ENCODE measurements at regions of chr5 and their contacts with region 1.

Region 1: GRCh38 chr5:137660349-137660817 is 75.5 kb downstream of the KLHL3 start:
- DNase-seq: peak; percentile 63 to 70 (median 69)
- H3K4me3 ChIP-seq: no peak overlapping the region
- H3K4me3 Mint-ChIP-seq: peak overlapping the region in 1 of 8 donors; percentile 1
- H3K27ac ChIP-seq: no peak overlapping the region
- H3K27ac Mint-ChIP-seq: peak overlapping the region in 3 of 7 donors; percentile 3 to 40 (median 25)
- H3K4me1 ChIP-seq: peaks cover 4% of the 10 kb centered on the region
- H3K4me1 Mint-ChIP-seq: peaks cover 3 to 11% (median 9%) of the 10 kb centered on the region in 4 donors
- H3K27me3 ChIP-seq: no peaks in the 10 kb centered on the region
- H3K27me3 Mint-ChIP-seq: no peaks in the 10 kb centered on the region

Region 2: DNA sequence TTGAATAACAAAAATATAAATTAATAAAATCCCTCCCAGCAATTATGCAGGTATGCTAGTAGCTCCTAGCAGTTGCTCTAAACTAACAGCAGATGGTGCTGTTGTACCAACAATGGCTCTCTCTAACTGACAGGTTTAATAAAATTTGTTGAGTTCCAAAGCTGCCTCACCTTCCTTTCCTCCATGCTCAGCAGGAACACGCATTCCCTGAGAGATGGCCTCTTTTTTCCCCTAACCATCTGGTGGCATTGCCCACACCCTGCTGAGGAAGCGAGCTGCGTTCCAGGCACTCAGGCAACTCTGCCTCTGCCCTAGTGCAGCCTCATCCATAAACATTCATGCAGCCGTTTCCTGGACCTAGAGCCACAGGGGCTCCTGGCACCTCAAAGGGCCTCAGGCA is 30.7 kb before region 1 on chr5:
- CTCF ChIA-PET with region 1: interaction called, 41 read pairs
- POLR2A ChIA-PET with region 1: interaction called, 3 read pairs
- intact Hi-C with region 1: no loop called
- DNase-seq: peak in 4 of 5 donors; percentile 52 to 54 (median 54)
- H3K4me3 ChIP-seq: no peak overlapping the region
- H3K4me3 Mint-ChIP-seq: no peak overlapping the region
- H3K27ac ChIP-seq: no peak overlapping the region
- H3K27ac Mint-ChIP-seq: no peak overlapping the region
- H3K4me1 ChIP-seq: no peaks in the 10 kb centered on the region
- H3K4me1 Mint-ChIP-seq: no peaks in the 10 kb centered on the region
- H3K27me3 ChIP-seq: no peaks in the 10 kb centered on the region
- H3K27me3 Mint-ChIP-seq: no peaks in the 10 kb centered on the region

Region 3: DNA sequence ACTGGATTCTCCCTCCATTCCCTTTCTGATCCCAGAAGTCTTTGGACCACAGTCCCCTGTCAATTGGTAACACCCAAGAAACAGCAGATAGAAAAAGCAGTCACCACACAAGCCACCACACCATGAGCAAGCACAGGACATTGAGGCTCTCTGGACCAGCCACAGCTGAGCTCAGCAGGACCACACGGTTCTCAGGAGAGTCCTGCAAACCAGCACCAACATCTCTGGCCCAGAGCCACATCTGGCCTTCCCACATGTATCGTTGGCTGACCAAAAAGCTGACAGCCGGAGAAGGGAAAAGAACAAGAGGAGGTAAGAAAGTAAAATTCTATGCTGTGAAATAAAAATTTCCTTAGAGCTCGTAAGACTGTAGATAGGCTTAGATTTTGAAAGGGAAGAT is 18.8 kb after region 1 on chr5:
- CTCF ChIA-PET with region 1: interaction called, 15 read pairs
- POLR2A ChIA-PET with region 1: no interaction called
- intact Hi-C with region 1: no loop called
- DNase-seq: no peak
- H3K4me3 ChIP-seq: no peak overlapping the region
- H3K4me3 Mint-ChIP-seq: no peak overlapping the region
- H3K27ac ChIP-seq: no peak overlapping the region
- H3K27ac Mint-ChIP-seq: no peak overlapping the region
- H3K4me1 ChIP-seq: no peaks in the 10 kb centered on the region
- H3K4me1 Mint-ChIP-seq: peaks cover 0 to 6% (median under 1%) of the 10 kb centered on the region in 4 donors
- H3K27me3 ChIP-seq: no peaks in the 10 kb centered on the region
- H3K27me3 Mint-ChIP-seq: no peaks in the 10 kb centered on the region

Region 4: DNA sequence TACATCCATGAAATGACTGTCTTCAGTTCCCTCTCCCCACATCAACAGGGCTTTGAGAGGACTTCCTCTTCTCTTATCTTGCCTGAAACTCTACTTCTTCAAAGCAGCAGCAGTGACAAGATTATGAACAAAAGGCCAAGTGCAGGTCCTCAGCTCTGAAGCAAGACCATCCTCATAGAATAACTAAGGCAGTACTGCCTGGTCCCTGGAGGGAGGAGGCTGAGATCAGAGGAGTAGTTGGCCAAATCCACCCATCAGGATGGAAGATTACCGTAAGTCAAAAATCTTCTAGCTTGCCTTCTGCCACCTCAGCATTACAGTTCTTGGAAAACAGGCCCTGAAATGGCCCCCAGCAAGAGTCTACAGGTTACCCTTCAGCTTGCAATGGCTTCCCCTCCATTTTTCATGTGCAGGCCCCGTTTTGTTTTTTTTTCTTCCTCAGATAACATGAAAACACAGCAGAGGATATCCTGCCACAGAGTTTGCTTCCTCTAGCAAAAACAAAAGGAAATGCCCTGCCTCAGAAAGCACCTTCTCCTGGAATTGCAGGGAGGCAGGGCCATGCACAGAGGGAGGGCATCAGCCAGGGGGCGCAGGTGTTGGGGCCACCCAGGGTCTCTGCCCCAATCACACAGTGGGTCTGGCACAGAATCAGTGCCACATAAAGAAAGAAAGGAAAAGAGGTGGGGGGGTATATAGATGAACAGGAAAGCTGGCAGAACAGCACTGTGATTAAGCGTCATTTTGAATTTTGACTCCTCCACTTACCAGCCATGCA is 35.5 kb after region 1 on chr5:
- CTCF ChIA-PET with region 1: interaction called, 71 read pairs
- POLR2A ChIA-PET with region 1: interaction called, 38 read pairs
- intact Hi-C with region 1: loop called (anchors 2 kb)
- DNase-seq: peak; percentile 42 to 66 (median 52)
- H3K4me3 ChIP-seq: peak overlapping the region in 1 of 2 donors; percentile 9
- H3K4me3 Mint-ChIP-seq: peak overlapping the region; percentile 69 to 89 (median 81)
- H3K27ac ChIP-seq: peak overlapping the region; percentile 4
- H3K27ac Mint-ChIP-seq: peak overlapping the region; percentile 86 to 96 (median 92)
- H3K4me1 ChIP-seq: peaks cover 47% of the 10 kb centered on the region
- H3K4me1 Mint-ChIP-seq: peaks cover 34 to 68% (median 56%) of the 10 kb centered on the region in 4 donors
- H3K27me3 ChIP-seq: no peaks in the 10 kb centered on the region
- H3K27me3 Mint-ChIP-seq: no peaks in the 10 kb centered on the region

Region 5: GRCh38 chr5:137730336-137730735 is 70.0 kb after region 1 on chr5:
- CTCF ChIA-PET with region 1: interaction called, 653 read pairs
- POLR2A ChIA-PET with region 1: interaction called, 31 read pairs
- intact Hi-C with region 1: no loop called
- DNase-seq: no peak
- H3K4me3 ChIP-seq: no peak overlapping the region
- H3K4me3 Mint-ChIP-seq: peak overlapping the region in 1 of 8 donors; percentile 14
- H3K27ac ChIP-seq: no peak overlapping the region
- H3K27ac Mint-ChIP-seq: no peak overlapping the region
- H3K4me1 ChIP-seq: peaks cover 35% of the 10 kb centered on the region
- H3K4me1 Mint-ChIP-seq: peaks cover 0 to 23% (median 19%) of the 10 kb centered on the region in 4 donors
- H3K27me3 ChIP-seq: no peaks in the 10 kb centered on the region
- H3K27me3 Mint-ChIP-seq: no peaks in the 10 kb centered on the region

Region 6: DNA sequence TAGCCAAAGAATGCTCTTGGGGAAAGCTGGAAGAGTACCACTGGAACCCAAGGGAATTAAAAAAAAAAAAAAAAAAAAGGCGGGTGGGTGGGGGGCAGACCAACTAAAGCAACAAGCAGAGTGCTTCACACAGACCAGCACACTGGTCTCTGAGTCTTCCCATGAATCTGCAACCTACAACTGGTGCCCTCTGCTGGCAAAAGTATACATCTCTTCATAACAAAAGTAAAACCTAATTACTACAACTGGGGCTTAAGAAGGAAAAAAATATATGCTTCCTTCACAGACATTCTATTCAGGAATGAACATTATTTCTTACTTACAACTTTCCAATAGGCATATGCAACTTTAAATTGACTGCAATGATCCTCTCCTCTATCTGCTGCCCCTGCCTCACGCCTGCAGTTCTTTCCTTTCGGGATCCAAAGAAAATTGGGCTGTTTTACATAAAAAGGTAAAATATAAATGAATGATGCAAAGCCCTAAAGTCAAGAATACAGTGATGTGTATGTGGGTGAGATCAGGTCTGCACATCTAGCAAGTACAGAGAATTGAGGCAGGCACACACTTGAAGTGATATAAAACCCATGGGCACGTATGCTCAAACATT is 82.8 kb after region 1 on chr5:
- CTCF ChIA-PET with region 1: interaction called, 653 read pairs
- POLR2A ChIA-PET with region 1: interaction called, 31 read pairs
- intact Hi-C with region 1: loop called (anchors 1 kb)
- DNase-seq: peak; percentile 60 to 71 (median 70)
- H3K4me3 ChIP-seq: no peak overlapping the region
- H3K4me3 Mint-ChIP-seq: no peak overlapping the region
- H3K27ac ChIP-seq: no peak overlapping the region
- H3K27ac Mint-ChIP-seq: no peak overlapping the region
- H3K4me1 ChIP-seq: peaks cover 5% of the 10 kb centered on the region
- H3K4me1 Mint-ChIP-seq: peaks cover 0 to 20% (median 3%) of the 10 kb centered on the region in 4 donors
- H3K27me3 ChIP-seq: no peaks in the 10 kb centered on the region
- H3K27me3 Mint-ChIP-seq: no peaks in the 10 kb centered on the region

Region 7: GRCh38 chr5:137975208-137975607 is 314.8 kb after region 1 on chr5:
- CTCF ChIA-PET with region 1: no interaction called
- POLR2A ChIA-PET with region 1: no interaction called
- intact Hi-C with region 1: no loop called
- DNase-seq: no peak
- H3K4me3 ChIP-seq: no peak overlapping the region
- H3K4me3 Mint-ChIP-seq: no peak overlapping the region
- H3K27ac ChIP-seq: no peak overlapping the region
- H3K27ac Mint-ChIP-seq: peak overlapping the region in 3 of 7 donors; percentile 5 to 49 (median 32)
- H3K4me1 ChIP-seq: no peaks in the 10 kb centered on the region
- H3K4me1 Mint-ChIP-seq: peaks cover 0 to 8% (median 1%) of the 10 kb centered on the region in 4 donors
- H3K27me3 ChIP-seq: no peaks in the 10 kb centered on the region
- H3K27me3 Mint-ChIP-seq: no peaks in the 10 kb centered on the region

Measured in CD4-positive, alpha-beta memory T cell (primary cell).